ENCODE measurements at regions of chr9 and their contacts with region 1.

Region 1: DNA sequence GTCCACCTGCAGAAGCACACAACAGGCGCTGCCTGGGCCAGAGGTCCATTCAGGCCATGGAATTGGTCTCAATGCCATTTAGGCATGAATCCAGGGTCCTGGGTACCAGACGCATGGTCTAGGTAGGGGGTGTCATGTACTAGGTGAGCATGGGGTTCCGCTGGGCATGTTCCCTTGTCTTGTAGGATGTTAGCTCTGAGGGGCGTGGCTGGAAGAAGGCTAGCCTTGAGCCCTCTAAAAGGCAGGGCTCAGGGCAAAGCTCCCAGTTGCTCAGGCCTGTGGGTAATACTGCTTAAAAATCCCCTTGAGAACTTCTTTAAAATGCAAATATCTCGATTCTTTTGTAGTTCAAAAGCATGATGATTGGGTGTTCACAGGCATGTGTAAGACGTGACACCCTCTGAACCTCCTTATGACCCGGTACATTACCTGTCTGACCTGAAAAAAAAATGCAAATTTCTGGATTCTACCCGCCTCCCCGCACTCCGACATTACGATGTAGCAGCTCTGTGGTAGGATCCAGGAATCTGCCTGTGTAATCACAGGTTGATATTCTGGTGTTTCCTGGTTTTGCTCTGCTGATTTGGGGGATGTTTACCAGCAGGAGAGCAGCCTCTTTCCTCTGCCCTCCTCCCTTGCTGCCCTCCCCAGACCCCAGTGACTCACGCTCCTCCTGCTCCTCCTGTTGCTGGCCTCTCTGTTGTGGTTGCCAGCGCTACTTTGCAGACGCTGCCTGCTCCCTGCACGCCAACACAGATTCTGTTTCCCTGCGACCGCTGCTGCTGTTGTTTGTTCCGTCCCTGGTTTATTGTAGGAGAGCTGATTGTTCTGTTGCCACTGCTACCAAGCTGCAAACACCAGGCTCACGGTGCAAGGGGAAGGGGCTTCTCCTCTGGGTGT is 5.7 kb downstream of the TMC1 start:
- DNase-seq: peak; percentile 77
- ATAC-seq: peak; percentile 90
- H3K4me3 ChIP-seq: peak overlapping the region; percentile 51
- H3K27ac ChIP-seq: peak overlapping the region; percentile 66
- H3K4me1 ChIP-seq: peaks cover 16% of the 10 kb centered on the region
- H3K27me3 ChIP-seq: no peaks in the 10 kb centered on the region
- CTCF ChIP-seq: peak in 1 of 3 experiments; percentile 22; a peak in 1 of 6 replicates
- EP300 ChIP-seq: peak; percentile 3 to 63; a peak in 1 of 4 replicates
- POLR2A ChIP-seq: peak; percentile 76
- RAD21 ChIP-seq: no peak

Region 2: GRCh38 chr9:71975833-71976232 is 551.3 kb before region 1 on chr9:
- CTCF ChIA-PET with region 1: no interaction called
- POLR2A ChIA-PET with region 1: no interaction called
- RAD21 ChIA-PET with region 1: no interaction called
- SMC1A ChIA-PET with region 1: no interaction called
- in situ Hi-C with region 1: no loop called
- intact Hi-C with region 1: no loop called
- DNase-seq: no peak
- ATAC-seq: no peak
- H3K4me3 ChIP-seq: no peak overlapping the region
- H3K27ac ChIP-seq: no peak overlapping the region
- H3K4me1 ChIP-seq: no peaks in the 10 kb centered on the region
- H3K27me3 ChIP-seq: no peaks in the 10 kb centered on the region
- CTCF ChIP-seq: peak in 1 of 3 experiments; percentile 44; a peak in 2 of 6 replicates
- EP300 ChIP-seq: no peak
- POLR2A ChIP-seq: no peak
- RAD21 ChIP-seq: peak; percentile 30; the same call in 1 of the 2 replicates

Region 3: DNA sequence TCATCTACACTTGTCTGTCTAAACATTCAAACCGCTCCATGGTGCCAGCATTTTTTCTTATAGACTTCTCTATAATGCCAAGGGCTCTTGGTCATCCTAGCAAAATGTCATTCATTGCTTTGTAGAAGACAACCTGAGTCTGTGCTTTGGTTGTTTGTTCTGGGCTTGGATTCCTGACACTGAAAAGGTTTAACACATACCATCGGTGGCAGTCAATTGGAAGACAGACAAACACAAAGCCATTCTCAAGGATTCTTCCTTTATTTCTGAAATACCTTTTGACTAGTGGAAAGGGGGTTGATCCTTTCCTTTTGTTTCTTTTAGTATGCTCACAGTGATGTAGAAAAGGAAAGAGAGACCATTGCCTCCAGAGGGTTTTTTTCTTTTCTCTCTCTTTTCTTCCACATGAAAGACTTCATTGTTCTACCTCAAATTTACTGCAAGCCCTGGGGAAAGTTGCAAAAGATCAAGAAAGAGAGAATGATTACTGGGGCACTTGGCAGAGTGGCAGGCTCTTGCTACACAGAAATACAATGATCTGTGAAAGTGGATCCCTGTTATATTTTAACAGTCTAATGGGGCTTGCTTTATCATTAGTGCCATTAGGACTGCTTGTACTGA is 72.2 kb before region 1 on chr9:
- CTCF ChIA-PET with region 1: no interaction called
- POLR2A ChIA-PET with region 1: no interaction called
- RAD21 ChIA-PET with region 1: interaction called, 14 read pairs
- SMC1A ChIA-PET with region 1: interaction called, 18 read pairs
- in situ Hi-C with region 1: no loop called
- intact Hi-C with region 1: no loop called
- DNase-seq: no peak
- ATAC-seq: no peak; the same call in 2 of the 3 replicates
- H3K4me3 ChIP-seq: no peak overlapping the region
- H3K27ac ChIP-seq: no peak overlapping the region
- H3K4me1 ChIP-seq: no peaks in the 10 kb centered on the region
- H3K27me3 ChIP-seq: no peaks in the 10 kb centered on the region
- CTCF ChIP-seq: no peak
- EP300 ChIP-seq: no peak
- POLR2A ChIP-seq: no peak
- RAD21 ChIP-seq: no peak

Region 4: GRCh38 chr9:72464857-72465592 is 62.1 kb before region 1 on chr9:
- CTCF ChIA-PET with region 1: no interaction called
- POLR2A ChIA-PET with region 1: no interaction called
- RAD21 ChIA-PET with region 1: interaction called, 8 read pairs
- SMC1A ChIA-PET with region 1: interaction called, 18 read pairs
- in situ Hi-C with region 1: no loop called
- intact Hi-C with region 1: loop called (anchors 5 kb)
- DNase-seq: no peak
- ATAC-seq: peak; percentile 21; the same call in 2 of the 3 replicates
- H3K4me3 ChIP-seq: no peak overlapping the region
- H3K27ac ChIP-seq: no peak overlapping the region
- H3K4me1 ChIP-seq: no peaks in the 10 kb centered on the region
- H3K27me3 ChIP-seq: no peaks in the 10 kb centered on the region
- CTCF ChIP-seq: no peak
- EP300 ChIP-seq: no peak
- POLR2A ChIP-seq: no peak
- RAD21 ChIP-seq: no peak

Region 5: DNA sequence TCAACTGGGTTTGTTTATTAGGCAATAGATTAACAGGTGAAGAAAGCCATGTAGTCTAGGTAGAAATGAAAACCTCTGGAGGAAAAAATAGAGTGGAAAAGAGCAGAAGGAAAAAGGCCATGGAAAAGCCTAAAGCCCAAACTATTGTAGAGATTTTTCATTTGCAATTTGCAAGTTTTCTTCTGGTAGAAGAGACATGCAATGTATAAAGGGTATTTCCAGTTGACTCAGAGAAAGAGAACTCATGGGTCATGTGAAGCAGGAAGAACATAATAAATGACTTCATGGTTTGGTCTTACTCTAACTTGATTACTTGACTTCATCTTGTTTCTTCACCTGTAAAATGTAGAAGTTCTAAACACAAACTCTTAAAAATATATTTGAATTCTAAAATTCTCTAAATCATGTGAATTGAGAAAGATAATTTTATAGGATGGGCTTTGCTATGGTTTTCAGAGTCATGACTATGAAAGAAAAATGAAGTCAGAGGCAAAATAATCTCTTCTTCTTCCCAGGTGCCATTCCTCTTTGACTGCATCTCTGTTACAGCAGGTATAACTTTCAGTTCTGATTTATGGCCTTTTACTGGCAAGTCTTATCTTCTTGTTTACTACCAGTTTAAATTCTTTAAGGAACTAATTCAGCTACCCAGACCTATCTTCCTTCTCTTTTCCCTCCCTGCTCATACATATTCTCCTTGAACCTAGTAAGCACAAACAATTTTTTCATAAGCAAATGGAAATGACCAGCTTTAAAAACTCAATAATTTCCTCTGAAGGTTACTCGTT is 53.5 kb before region 1 on chr9:
- CTCF ChIA-PET with region 1: no interaction called
- POLR2A ChIA-PET with region 1: interaction called, 3 read pairs
- RAD21 ChIA-PET with region 1: interaction called, 7 read pairs
- SMC1A ChIA-PET with region 1: interaction called, 7 read pairs
- in situ Hi-C with region 1: no loop called
- intact Hi-C with region 1: loop called (anchors 5 kb)
- DNase-seq: peak; percentile 48
- ATAC-seq: peak; percentile 94
- H3K4me3 ChIP-seq: no peak overlapping the region
- H3K27ac ChIP-seq: peak overlapping the region; percentile 94
- H3K4me1 ChIP-seq: peaks cover 4% of the 10 kb centered on the region
- H3K27me3 ChIP-seq: no peaks in the 10 kb centered on the region
- CTCF ChIP-seq: no peak
- EP300 ChIP-seq: peak in 1 of 2 experiments; percentile 70; a peak in 2 of 4 replicates
- POLR2A ChIP-seq: no peak
- RAD21 ChIP-seq: no peak

Region 6: GRCh38 chr9:72509635-72510034 is 17.5 kb before region 1 on chr9:
- CTCF ChIA-PET with region 1: interaction called, 13 read pairs
- POLR2A ChIA-PET with region 1: interaction called, 7 read pairs
- RAD21 ChIA-PET with region 1: interaction called, 16 read pairs
- SMC1A ChIA-PET with region 1: interaction called, 22 read pairs
- in situ Hi-C with region 1: no loop called
- intact Hi-C with region 1: no loop called
- DNase-seq: peak; percentile 51
- ATAC-seq: peak; percentile 96
- H3K4me3 ChIP-seq: no peak overlapping the region
- H3K27ac ChIP-seq: peak overlapping the region; percentile 88
- H3K4me1 ChIP-seq: peaks cover 14% of the 10 kb centered on the region
- H3K27me3 ChIP-seq: no peaks in the 10 kb centered on the region
- CTCF ChIP-seq: no peak
- EP300 ChIP-seq: peak in 1 of 2 experiments; percentile 45; a peak in 1 of 4 replicates
- POLR2A ChIP-seq: no peak
- RAD21 ChIP-seq: no peak

Region 7: GRCh38 chr9:72592502-72593403 is 65.6 kb after region 1 on chr9:
- CTCF ChIA-PET with region 1: interaction called, 4 read pairs
- POLR2A ChIA-PET with region 1: no interaction called
- RAD21 ChIA-PET with region 1: interaction called, 6 read pairs
- SMC1A ChIA-PET with region 1: interaction called, 9 read pairs
- in situ Hi-C with region 1: no loop called
- intact Hi-C with region 1: loop called (anchors 5 kb)
- DNase-seq: peak; percentile 23
- ATAC-seq: peak; percentile 94
- H3K4me3 ChIP-seq: no peak overlapping the region
- H3K27ac ChIP-seq: no peak overlapping the region
- H3K4me1 ChIP-seq: no peaks in the 10 kb centered on the region
- H3K27me3 ChIP-seq: no peaks in the 10 kb centered on the region
- CTCF ChIP-seq: peak; percentile 64 to 76 (median 69)
- EP300 ChIP-seq: no peak
- POLR2A ChIP-seq: no peak
- RAD21 ChIP-seq: peak; percentile 86

Region 8: GRCh38 chr9:72827950-72828731 is 301.0 kb after region 1 on chr9:
- CTCF ChIA-PET with region 1: no interaction called
- POLR2A ChIA-PET with region 1: no interaction called
- RAD21 ChIA-PET with region 1: no interaction called
- SMC1A ChIA-PET with region 1: no interaction called
- in situ Hi-C with region 1: no loop called
- intact Hi-C with region 1: no loop called
- DNase-seq: no peak
- ATAC-seq: no peak
- H3K4me3 ChIP-seq: no peak overlapping the region
- H3K27ac ChIP-seq: no peak overlapping the region
- H3K4me1 ChIP-seq: no peaks in the 10 kb centered on the region
- H3K27me3 ChIP-seq: no peaks in the 10 kb centered on the region
- CTCF ChIP-seq: no peak
- EP300 ChIP-seq: no peak
- POLR2A ChIP-seq: no peak
- RAD21 ChIP-seq: no peak

Region 9: GRCh38 chr9:73183917-73184861 is 657.0 kb after region 1 on chr9:
- CTCF ChIA-PET with region 1: no interaction called
- POLR2A ChIA-PET with region 1: no interaction called
- RAD21 ChIA-PET with region 1: no interaction called
- SMC1A ChIA-PET with region 1: no interaction called
- in situ Hi-C with region 1: no loop called
- intact Hi-C with region 1: no loop called
- DNase-seq: no peak
- ATAC-seq: peak; percentile 51; the same call in 1 of the 3 replicates
- H3K4me3 ChIP-seq: no peak overlapping the region
- H3K27ac ChIP-seq: no peak overlapping the region
- H3K4me1 ChIP-seq: peaks cover 4% of the 10 kb centered on the region; the same call in 1 of the 2 replicates
- H3K27me3 ChIP-seq: no peaks in the 10 kb centered on the region
- CTCF ChIP-seq: peak in 2 of 3 experiments; percentile 9 to 15; a peak in 3 of 6 replicates
- EP300 ChIP-seq: no peak
- POLR2A ChIP-seq: no peak
- RAD21 ChIP-seq: peak; percentile 79

Measured in GM12878 (cell line).